AG04450 (cell line): ENCODE measurements at regions of chr1 and their contacts with region 1.

Region 1: DNA sequence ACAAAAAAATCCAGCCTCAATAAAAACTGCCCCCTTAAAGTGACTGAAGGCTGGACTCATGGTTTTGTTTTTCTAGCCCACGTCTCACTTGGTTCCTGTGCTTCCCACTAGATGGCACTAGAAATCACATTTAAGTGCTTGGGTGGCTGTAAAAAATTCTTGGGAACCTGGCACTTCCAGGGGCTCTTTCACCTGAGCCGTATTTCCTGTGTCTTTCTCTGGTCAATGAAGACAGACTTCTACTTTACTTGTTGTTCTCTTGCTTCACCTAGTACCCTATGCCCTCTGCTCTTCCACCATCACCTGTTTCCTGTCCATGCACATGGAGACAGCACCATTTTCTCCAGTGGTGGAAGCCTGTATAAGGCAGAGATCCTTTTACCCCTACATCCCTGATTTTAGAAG is 20.0 kb downstream of the METTL13 start:
- DNase-seq: no peak
- H3K4me3 ChIP-seq: no peak overlapping the region
- H3K27ac ChIP-seq: no peak overlapping the region
- H3K27me3 ChIP-seq: no peaks in the 10 kb centered on the region
- CTCF ChIP-seq: peak; percentile 91

Region 2: GRCh38 chr1:171741872-171742576 is 59.5 kb before region 1 on chr1 and contains the start of gene VAMP4:
- CTCF ChIA-PET with region 1: interaction called, 16 read pairs
- POLR2A ChIA-PET with region 1: interaction called, 4 read pairs
- DNase-seq: no peak
- H3K4me3 ChIP-seq: peak within 1 kb of the TSS; percentile 90
- H3K27ac ChIP-seq: peak within 1 kb of the TSS; percentile 95
- H3K27me3 ChIP-seq: no peaks in the 10 kb centered on the region
- CTCF ChIP-seq: no peak
- polyA plus RNA-seq, gene VAMP4: 13.0 and 20.8 TPM in 2 replicates

Region 3: DNA sequence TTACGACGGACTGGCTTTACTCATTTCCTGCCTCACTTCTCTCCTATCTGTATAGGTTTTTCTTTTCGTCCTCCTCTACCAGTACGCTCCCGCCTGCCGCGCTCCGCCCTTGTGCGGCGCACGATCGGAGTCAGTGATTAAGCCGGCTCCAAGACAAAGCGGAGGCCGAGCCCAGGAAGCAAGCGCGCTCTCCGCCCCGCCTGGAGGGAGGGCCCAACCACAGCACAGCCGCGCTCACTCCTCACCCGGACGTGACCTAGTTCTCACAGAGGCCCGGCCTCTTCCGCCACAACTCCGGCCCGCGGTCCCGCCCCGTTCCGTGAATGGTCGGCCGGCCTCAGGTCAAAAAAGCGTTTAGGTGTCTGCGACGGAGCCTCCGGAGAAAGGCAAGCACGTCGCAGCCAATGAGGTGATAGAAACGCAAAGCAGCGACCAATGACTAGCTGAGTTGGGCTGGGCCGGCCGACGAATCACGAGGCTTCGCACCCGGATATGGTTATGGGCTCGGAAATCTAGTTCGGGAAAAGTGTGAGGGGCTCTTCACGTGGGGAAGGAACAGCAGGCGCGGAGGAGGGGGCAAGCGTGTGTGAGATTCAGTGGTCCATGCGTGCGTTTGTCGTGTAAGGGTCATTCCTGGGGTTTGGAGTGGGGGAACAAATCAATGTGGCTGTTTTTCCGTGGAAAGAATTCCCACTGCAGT is 20.2 kb before region 1 on chr1 and contains the start of gene METTL13:
- CTCF ChIA-PET with region 1: interaction called, 19 read pairs
- POLR2A ChIA-PET with region 1: no interaction called
- DNase-seq: peak; percentile 98
- H3K4me3 ChIP-seq: peak within 1 kb of the TSS; percentile 99
- H3K27ac ChIP-seq: peak within 1 kb of the TSS; percentile 86
- H3K27me3 ChIP-seq: no peaks in the 10 kb centered on the region
- CTCF ChIP-seq: no peak
- polyA plus RNA-seq, gene METTL13: 32.0 and 32.9 TPM in 2 replicates

Region 4: DNA sequence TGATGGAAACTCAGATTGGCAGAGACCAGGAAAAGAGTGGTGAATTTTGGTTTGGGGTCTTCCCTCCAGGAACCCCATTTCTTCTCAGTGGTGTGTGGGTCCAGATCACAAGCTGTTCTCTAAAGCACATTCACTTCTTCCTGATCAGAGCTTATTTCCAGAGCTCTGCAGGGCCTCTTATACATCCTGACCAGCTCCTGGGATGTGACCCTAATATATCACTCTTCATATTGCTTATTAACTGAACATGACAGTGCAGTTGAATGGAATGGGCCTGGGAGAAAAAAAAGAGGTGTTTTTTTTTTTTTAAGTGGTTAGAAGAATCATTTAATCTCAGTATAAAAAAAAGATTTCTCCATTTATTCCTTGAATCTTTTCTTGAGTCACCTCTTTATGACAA is 10.2 kb after region 1 on chr1:
- CTCF ChIA-PET with region 1: interaction called, 12 read pairs
- POLR2A ChIA-PET with region 1: no interaction called
- DNase-seq: no peak
- H3K4me3 ChIP-seq: no peak overlapping the region
- H3K27ac ChIP-seq: no peak overlapping the region
- H3K27me3 ChIP-seq: no peaks in the 10 kb centered on the region
- CTCF ChIP-seq: no peak

Region 5: GRCh38 chr1:171826973-171827372 is 25.5 kb after region 1 on chr1:
- CTCF ChIA-PET with region 1: no interaction called
- POLR2A ChIA-PET with region 1: no interaction called
- DNase-seq: no peak
- H3K4me3 ChIP-seq: no peak overlapping the region
- H3K27ac ChIP-seq: no peak overlapping the region
- H3K27me3 ChIP-seq: peaks cover 8% of the 10 kb centered on the region
- CTCF ChIP-seq: no peak

Region 6: DNA sequence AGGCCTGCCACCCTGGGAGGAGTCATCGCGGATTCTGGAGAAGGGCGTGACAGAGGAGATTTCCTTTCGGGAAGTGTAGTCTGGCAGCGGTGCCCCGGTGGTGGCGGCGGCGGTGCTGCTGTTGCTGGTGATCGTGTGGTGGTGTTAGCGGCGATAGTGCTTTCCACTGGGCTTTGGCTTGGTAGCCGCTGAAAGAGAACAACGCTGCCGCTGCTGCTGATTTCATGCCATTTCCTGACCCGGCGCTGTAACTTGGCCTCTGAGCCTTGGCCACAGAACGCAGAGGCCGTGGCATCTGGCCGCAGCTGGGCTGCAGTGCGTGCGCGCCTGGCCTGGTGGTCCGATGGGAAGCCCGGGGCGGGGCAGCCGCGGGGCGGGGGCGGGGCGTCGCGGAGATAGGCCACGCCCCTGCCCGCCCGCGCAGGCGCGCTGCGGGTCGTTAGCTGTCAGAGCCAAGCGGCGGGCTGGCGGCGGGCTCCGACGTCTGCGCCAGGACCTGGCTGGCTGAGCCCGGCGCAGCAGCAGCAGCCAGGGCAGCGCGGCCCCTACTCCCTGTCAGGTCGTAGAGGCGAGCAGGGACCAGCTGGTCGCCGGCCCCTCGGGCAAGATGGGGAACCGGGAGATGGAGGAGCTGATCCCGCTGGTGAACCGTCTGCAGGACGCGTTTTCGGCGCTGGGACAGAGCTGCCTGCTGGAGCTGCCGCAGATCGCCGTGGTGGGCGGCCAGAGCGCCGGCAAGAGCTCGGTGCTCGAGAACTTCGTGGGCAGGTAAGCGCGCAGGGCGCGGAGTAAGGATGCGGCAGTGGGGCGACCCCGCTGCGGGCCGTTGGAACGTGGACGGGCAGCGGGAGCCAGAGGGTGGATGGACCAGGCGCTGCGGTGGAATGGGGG is 39.8 kb after region 1 on chr1 and contains the start of gene DNM3:
- CTCF ChIA-PET with region 1: interaction called, 13 read pairs
- POLR2A ChIA-PET with region 1: no interaction called
- DNase-seq: peak; percentile 60
- H3K4me3 ChIP-seq: peak within 1 kb of the TSS; percentile 67
- H3K27ac ChIP-seq: no peak within 1 kb of the TSS
- H3K27me3 ChIP-seq: peaks cover 10% of the 10 kb centered on the region
- CTCF ChIP-seq: no peak
- polyA plus RNA-seq, gene DNM3: 0.37 and 0.46 TPM in 2 replicates

Region 7: DNA sequence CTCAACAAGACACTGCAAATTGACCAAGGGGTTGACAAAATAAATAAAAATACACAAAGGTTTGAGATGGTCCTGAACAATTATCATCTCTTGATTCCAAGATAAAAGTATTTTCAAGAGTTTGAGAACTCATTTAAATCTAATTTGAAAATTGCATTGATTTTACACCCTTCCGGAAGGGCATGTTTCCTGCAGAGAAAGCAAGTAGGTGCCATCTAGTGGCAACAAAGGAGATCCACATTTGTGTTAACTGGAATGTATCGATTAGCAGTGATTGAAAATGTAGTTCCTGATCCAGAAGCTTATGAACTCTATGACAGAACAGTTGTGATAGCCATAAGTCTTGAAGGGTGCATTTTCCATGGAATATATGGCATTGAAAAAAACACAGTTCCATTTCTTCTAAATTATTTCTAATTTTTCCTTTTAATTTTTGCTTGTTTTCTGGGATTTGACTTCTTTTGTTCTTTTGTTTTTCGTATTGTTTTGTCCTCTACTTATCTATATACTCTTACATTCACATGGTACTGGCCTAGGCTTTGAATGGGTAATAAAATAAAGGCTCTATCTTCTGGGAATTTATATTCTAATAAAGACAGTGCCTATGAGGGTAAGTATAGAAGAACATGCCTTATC is 183.5 kb after region 1 on chr1:
- CTCF ChIA-PET with region 1: interaction called, 484 read pairs
- POLR2A ChIA-PET with region 1: interaction called, 4 read pairs
- DNase-seq: no peak
- H3K4me3 ChIP-seq: no peak overlapping the region
- H3K27ac ChIP-seq: no peak overlapping the region
- H3K27me3 ChIP-seq: no peaks in the 10 kb centered on the region
- CTCF ChIP-seq: peak; percentile 89